B cell (primary cell): ENCODE measurements at regions of chr12 and their contacts with region 1.

Region 1: GRCh38 chr12:54032627-54033100 is at the start of gene HOXC5:
- DNase-seq: peak; percentile 79
- ATAC-seq: peak; percentile 65
- H3K4me3 ChIP-seq: peak within 1 kb of the TSS in 3 of 5 experiments; percentile 13 to 47 (median 36)
- H3K4me3 Mint-ChIP-seq: peak within 1 kb of the TSS; percentile 71
- H3K27ac ChIP-seq: no peak within 1 kb of the TSS
- H3K27ac Mint-ChIP-seq: peak within 1 kb of the TSS; percentile 41
- H3K4me1 ChIP-seq: peaks cover 28 to 51% of the 10 kb centered on the region in 2 donors
- H3K4me1 Mint-ChIP-seq: peaks cover 29% of the 10 kb centered on the region
- H3K27me3 ChIP-seq: peaks cover 0 to 96% (median 73%) of the 10 kb centered on the region in 4 experiments
- H3K27me3 Mint-ChIP-seq: peaks cover 73% of the 10 kb centered on the region
- CTCF ChIP-seq: peak; percentile 93
- total RNA-seq, gene HOXC5: not detected in 2 replicates

Region 2: GRCh38 chr12:53965281-53966084 is 67.2 kb before region 1 on chr12:
- CTCF ChIA-PET with region 1: interaction called, 3 read pairs
- POLR2A ChIA-PET with region 1: no interaction called
- intact Hi-C with region 1: loop called (anchors 5 kb)
- DNase-seq: peak; percentile 31
- ATAC-seq: no peak
- H3K4me3 ChIP-seq: no peak overlapping the region
- H3K4me3 Mint-ChIP-seq: peak overlapping the region; percentile 38
- H3K27ac ChIP-seq: no peak overlapping the region
- H3K27ac Mint-ChIP-seq: no peak overlapping the region
- H3K4me1 ChIP-seq: peaks cover 28 to 54% of the 10 kb centered on the region in 2 donors
- H3K4me1 Mint-ChIP-seq: peaks cover 21% of the 10 kb centered on the region
- H3K27me3 ChIP-seq: peaks cover 1 to 99% (median 92%) of the 10 kb centered on the region in 4 experiments
- H3K27me3 Mint-ChIP-seq: peaks cover 90% of the 10 kb centered on the region
- CTCF ChIP-seq: no peak

Region 3: DNA sequence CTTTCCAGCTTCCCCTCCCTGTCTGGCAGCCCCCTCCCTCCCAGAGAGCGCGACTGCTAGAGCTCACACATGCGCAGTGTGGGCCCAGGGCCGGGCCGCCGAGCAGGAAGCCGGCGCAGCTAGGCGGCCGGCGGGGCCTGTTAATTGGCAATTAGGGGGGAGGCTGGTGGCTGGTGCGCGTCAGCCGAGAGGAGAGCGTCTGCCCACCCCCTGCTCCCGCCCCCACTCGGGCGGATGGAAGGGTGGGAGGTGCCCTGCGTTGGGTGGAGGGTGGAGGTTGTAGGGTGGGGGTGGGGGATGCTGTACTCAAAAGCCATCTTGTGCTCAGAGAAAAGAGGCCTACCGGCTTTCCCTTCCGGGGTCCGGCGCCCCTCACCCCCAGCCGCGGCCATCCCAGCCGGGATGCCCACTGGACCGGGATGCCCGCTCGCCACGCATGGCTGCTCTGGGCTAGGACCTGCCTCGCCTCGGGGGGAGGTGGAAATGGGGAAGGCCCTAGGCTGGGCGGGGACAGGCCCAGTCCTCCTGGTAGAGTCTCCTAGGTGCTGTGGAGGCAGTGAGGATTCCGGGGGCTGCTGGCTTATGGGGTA is 14.7 kb before region 1 on chr12:
- CTCF ChIA-PET with region 1: interaction called, 31 read pairs
- POLR2A ChIA-PET with region 1: interaction called, 7 read pairs
- intact Hi-C with region 1: no loop called
- DNase-seq: peak; percentile 84
- ATAC-seq: peak; percentile 87
- H3K4me3 ChIP-seq: peak overlapping the region in 4 of 5 experiments; percentile 43 to 71 (median 48)
- H3K4me3 Mint-ChIP-seq: peak overlapping the region; percentile 90
- H3K27ac ChIP-seq: peak overlapping the region; percentile 30 to 40
- H3K27ac Mint-ChIP-seq: peak overlapping the region; percentile 83
- H3K4me1 ChIP-seq: peaks cover 25 to 42% of the 10 kb centered on the region in 2 donors
- H3K4me1 Mint-ChIP-seq: peaks cover 22% of the 10 kb centered on the region
- H3K27me3 ChIP-seq: peaks cover 0 to 93% (median 73%) of the 10 kb centered on the region in 4 experiments
- H3K27me3 Mint-ChIP-seq: peaks cover 63% of the 10 kb centered on the region
- CTCF ChIP-seq: no peak

Region 4: DNA sequence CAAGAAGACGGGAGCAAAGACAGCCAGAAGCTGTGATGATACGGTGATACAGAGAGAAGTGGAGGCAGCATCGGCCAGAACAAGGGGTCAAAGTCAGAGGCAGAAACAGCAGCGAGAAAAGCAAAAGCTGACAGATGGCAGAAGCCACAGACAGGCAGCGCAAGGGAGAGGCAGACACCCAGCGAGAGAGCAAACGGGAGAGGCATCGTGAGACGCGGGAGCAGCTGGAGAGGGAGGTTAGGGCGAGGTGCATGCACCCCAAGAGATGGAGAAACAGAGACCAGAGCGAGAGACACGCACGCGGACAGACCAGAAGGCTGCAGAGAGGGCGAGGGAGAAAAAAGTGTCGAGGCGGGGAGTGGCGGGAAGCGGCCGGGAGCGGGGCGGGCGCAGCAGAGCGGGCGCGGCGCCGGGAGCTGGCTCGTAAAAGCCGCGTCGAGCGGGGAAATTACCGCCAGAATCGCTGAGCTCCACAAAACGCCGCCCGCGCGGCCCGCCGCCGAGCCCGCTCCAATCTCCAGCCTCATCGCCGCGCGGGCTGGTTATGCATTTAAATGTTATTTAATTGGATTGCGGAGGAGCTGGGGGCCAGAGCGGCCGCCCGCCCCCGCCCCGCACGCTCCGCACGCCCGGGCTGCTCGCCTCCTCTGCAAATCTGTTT is 140.5 kb after region 1 on chr12:
- CTCF ChIA-PET with region 1: interaction called, 10 read pairs
- POLR2A ChIA-PET with region 1: no interaction called
- intact Hi-C with region 1: no loop called
- DNase-seq: peak; percentile 48
- ATAC-seq: peak; percentile 33
- H3K4me3 ChIP-seq: peak overlapping the region in 3 of 5 experiments; percentile 35 to 56 (median 43)
- H3K4me3 Mint-ChIP-seq: no peak overlapping the region
- H3K27ac ChIP-seq: no peak overlapping the region
- H3K27ac Mint-ChIP-seq: no peak overlapping the region
- H3K4me1 ChIP-seq: peaks cover 16 to 30% of the 10 kb centered on the region in 2 donors
- H3K4me1 Mint-ChIP-seq: peaks cover 8% of the 10 kb centered on the region
- H3K27me3 ChIP-seq: peaks cover 0 to 61% (median 32%) of the 10 kb centered on the region in 4 experiments
- H3K27me3 Mint-ChIP-seq: no peaks in the 10 kb centered on the region
- CTCF ChIP-seq: no peak

Region 5: GRCh38 chr12:54201001-54201794 is 168.5 kb after region 1 on chr12:
- CTCF ChIA-PET with region 1: interaction called, 87 read pairs
- POLR2A ChIA-PET with region 1: no interaction called
- intact Hi-C with region 1: loop called (anchors 1 kb)
- DNase-seq: peak; percentile 79
- ATAC-seq: peak; percentile 91
- H3K4me3 ChIP-seq: no peak overlapping the region
- H3K4me3 Mint-ChIP-seq: no peak overlapping the region
- H3K27ac ChIP-seq: no peak overlapping the region
- H3K27ac Mint-ChIP-seq: no peak overlapping the region
- H3K4me1 ChIP-seq: peaks cover 16% of the 10 kb centered on the region in 2 donors
- H3K4me1 Mint-ChIP-seq: peaks cover 21% of the 10 kb centered on the region
- H3K27me3 ChIP-seq: peaks cover 0 to 71% (median 29%) of the 10 kb centered on the region in 4 experiments
- H3K27me3 Mint-ChIP-seq: peaks cover 62% of the 10 kb centered on the region
- CTCF ChIP-seq: peak; percentile 94

Region 6: DNA sequence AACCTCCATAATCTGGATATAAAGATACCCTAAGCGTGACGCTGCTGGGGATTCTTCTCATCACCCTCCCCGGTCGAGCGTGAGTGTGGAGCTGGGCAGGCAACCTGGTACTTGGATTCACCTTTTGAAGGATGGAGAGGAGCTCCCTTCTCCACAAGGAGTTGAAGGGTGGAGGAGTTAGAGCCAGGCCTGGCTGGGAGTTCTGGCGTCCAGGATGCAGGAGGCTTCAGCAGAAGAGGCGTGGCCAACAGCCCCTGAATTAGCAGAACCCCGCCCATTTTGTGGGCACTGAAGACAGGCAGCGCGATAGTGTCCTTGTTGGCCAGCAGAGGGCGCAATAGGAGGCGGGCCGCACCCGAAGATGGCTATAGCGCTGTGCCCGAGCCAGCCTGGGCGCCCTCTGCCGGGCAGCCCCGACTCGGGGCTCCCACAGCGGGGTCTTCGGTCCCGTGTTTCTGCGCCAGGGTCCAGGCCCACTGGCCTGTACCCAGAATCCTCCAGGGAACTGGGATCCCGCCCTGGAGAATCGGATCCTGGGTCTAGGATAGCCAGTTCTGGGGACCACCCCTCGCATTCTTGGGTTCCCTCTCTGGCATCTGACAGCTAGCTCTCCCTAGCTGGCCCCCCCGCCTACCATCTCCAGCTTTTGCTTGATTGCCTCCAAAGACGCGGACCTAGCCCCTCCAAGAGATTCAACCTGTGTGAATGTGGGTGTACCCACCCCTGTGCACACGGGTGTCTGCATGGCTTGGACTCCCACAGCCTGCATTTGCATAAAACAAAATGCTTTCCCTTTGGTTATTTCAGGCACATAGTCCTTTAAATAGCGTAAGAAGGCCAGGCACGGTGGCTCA is 182.1 kb after region 1 on chr12:
- CTCF ChIA-PET with region 1: interaction called, 11 read pairs
- POLR2A ChIA-PET with region 1: no interaction called
- intact Hi-C with region 1: no loop called
- DNase-seq: peak; percentile 95
- ATAC-seq: peak; percentile 83
- H3K4me3 ChIP-seq: peak overlapping the region; percentile 3 to 58 (median 46)
- H3K4me3 Mint-ChIP-seq: peak overlapping the region; percentile 90
- H3K27ac ChIP-seq: no peak overlapping the region
- H3K27ac Mint-ChIP-seq: peak overlapping the region; percentile 33
- H3K4me1 ChIP-seq: peaks cover 36 to 46% of the 10 kb centered on the region in 2 donors
- H3K4me1 Mint-ChIP-seq: peaks cover 44% of the 10 kb centered on the region
- H3K27me3 ChIP-seq: peaks cover 0 to 30% (median 6%) of the 10 kb centered on the region in 4 experiments
- H3K27me3 Mint-ChIP-seq: peaks cover 6% of the 10 kb centered on the region
- CTCF ChIP-seq: peak; percentile 100

Region 7: GRCh38 chr12:54324617-54325441 is 292.2 kb after region 1 on chr12 and contains the start of gene COPZ1:
- CTCF ChIA-PET with region 1: no interaction called
- POLR2A ChIA-PET with region 1: no interaction called
- intact Hi-C with region 1: no loop called
- DNase-seq: peak; percentile 97
- ATAC-seq: peak; percentile 93
- H3K4me3 ChIP-seq: peak within 1 kb of the TSS; percentile 54 to 97 (median 87)
- H3K4me3 Mint-ChIP-seq: peak within 1 kb of the TSS; percentile 94
- H3K27ac ChIP-seq: peak within 1 kb of the TSS; percentile 76 to 89
- H3K27ac Mint-ChIP-seq: peak within 1 kb of the TSS; percentile 96
- H3K4me1 ChIP-seq: peaks cover 9 to 11% of the 10 kb centered on the region in 2 donors
- H3K4me1 Mint-ChIP-seq: peaks cover 30% of the 10 kb centered on the region
- H3K27me3 ChIP-seq: no peaks in the 10 kb centered on the region
- H3K27me3 Mint-ChIP-seq: no peaks in the 10 kb centered on the region
- CTCF ChIP-seq: peak; percentile 85
- total RNA-seq, gene COPZ1: 72.1 and 78.2 TPM in 2 replicates